Caco-2 (cell line): ENCODE measurements at regions of chr4 and their contacts with region 1.

Region 1: DNA sequence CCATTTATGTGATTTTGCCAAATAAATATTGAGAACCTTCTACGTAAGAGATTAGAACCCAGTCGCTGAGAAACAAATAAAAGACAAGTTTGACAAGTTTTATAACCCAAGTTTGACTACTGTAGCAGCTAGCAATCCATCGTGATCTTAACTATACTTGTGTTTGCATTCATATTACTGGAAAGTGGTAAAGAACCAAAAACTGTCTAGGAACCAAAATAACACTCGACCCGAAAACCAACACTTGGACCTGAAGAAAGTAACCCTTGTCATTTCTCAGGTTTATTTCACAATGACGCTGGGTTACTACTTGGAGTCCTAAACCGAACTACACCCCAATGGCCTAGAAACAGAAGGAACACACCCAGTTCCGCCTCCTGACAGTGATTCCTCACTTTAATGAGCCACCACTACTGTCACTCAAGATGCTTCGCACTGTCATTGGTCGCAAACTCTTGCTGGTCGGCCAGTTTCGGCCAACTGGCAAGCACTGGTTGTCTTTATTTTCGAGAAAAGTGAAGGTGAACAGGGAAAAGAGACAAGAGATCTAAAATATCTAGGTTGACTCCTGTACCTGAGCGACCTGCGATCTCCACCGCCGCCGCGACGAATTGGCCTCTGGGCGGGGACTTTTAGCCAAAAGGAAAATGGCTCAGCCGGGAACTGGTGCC is 496 bp downstream of the FBXO8 start:
- DNase-seq: peak; percentile 86 to 87
- H3K4me3 ChIP-seq: peak overlapping the region; percentile 61
- H3K4me3 Mint-ChIP-seq: peak overlapping the region; percentile 81
- H3K27ac Mint-ChIP-seq: peak overlapping the region; percentile 99
- H3K4me1 ChIP-seq: peaks cover 7% of the 10 kb centered on the region; the same call in 1 of the 2 replicates
- H3K4me1 Mint-ChIP-seq: peaks cover 11% of the 10 kb centered on the region
- H3K27me3 ChIP-seq: no peaks in the 10 kb centered on the region
- H3K27me3 Mint-ChIP-seq: no peaks in the 10 kb centered on the region
- CTCF ChIP-seq: no peak

Region 2: DNA sequence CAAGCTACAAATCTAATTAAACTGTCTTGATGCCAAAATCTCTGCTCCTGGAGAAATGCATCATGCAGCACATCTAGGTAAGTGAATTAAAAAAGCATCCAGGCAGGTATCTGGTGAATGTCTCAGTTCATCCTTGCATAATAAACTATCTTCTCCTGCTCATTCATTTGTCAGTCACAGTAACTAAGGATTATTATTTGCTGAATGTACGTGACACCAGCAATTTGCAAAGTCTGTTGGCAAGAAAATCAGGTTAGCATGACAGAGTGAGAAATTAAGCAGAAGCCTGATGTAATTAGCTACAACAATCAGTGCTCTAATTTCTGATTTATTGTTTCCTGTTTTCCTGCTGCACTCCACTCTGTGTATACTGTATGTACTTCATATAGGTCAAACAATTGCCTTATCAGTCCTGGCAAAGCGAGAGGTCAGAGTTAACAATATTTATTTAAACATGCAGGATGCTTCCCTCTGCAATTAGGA is 213.1 kb before region 1 on chr4:
- CTCF ChIA-PET with region 1: no interaction called
- POLR2A ChIA-PET with region 1: no interaction called
- intact Hi-C with region 1: no loop called
- DNase-seq: no peak
- H3K4me3 ChIP-seq: no peak overlapping the region
- H3K4me3 Mint-ChIP-seq: no peak overlapping the region
- H3K27ac Mint-ChIP-seq: no peak overlapping the region
- H3K4me1 ChIP-seq: peaks cover 9% of the 10 kb centered on the region
- H3K4me1 Mint-ChIP-seq: peaks cover 25% of the 10 kb centered on the region
- H3K27me3 ChIP-seq: no peaks in the 10 kb centered on the region
- H3K27me3 Mint-ChIP-seq: no peaks in the 10 kb centered on the region
- CTCF ChIP-seq: no peak

Region 3: DNA sequence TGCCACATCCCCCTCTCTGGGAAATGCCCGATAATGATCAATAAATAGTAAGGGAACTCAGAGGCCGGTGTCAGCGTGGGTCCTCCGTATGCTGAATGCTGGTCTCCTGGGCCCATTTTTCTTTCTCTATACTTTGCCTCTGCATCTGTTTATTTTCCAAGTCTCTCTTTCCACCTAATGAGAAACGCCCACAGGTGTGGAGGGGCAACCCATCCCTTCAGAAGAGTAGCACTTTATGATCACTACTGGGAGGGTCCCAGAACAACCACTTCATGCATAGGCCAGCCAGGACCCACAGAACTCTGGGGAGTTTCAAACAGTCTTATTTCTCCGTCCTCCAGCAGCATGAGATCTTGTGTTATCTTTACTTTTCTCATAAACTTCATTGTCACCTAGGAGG is 100.8 kb after region 1 on chr4:
- CTCF ChIA-PET with region 1: no interaction called
- POLR2A ChIA-PET with region 1: no interaction called
- intact Hi-C with region 1: loop called (anchors 1 kb)
- DNase-seq: peak; percentile 59 to 60
- H3K4me3 ChIP-seq: no peak overlapping the region
- H3K4me3 Mint-ChIP-seq: peak overlapping the region; percentile 68
- H3K27ac Mint-ChIP-seq: peak overlapping the region; percentile 94
- H3K4me1 ChIP-seq: peaks cover 77% of the 10 kb centered on the region
- H3K4me1 Mint-ChIP-seq: peaks cover 28% of the 10 kb centered on the region
- H3K27me3 ChIP-seq: no peaks in the 10 kb centered on the region
- H3K27me3 Mint-ChIP-seq: no peaks in the 10 kb centered on the region
- CTCF ChIP-seq: no peak